ENCODE measurements at regions of chr16 and their contacts with region 1.

Region 1: GRCh38 chr16:47460711-47461597 is at the starts of genes ITFG1 and PHKB:
- DNase-seq: peak; percentile 91 to 97 (median 95)
- ATAC-seq: peak; percentile 95
- H3K4me3 ChIP-seq: peak within 1 kb of the TSS; percentile 77 to 87
- H3K4me3 Mint-ChIP-seq: peak within 1 kb of the TSS; percentile 99
- H3K27ac ChIP-seq: peak within 1 kb of the TSS; percentile 77 to 95
- H3K27ac Mint-ChIP-seq: peak within 1 kb of the TSS; percentile 95
- H3K4me1 ChIP-seq: peaks cover 33% of the 10 kb centered on the region
- H3K4me1 Mint-ChIP-seq: peaks cover 72% of the 10 kb centered on the region
- H3K27me3 ChIP-seq: no peaks in the 10 kb centered on the region
- H3K27me3 Mint-ChIP-seq: no peaks in the 10 kb centered on the region
- CTCF ChIP-seq: no peak
- total RNA-seq, gene ITFG1: 13.2 to 16.8 TPM
- total RNA-seq, gene PHKB: 32.4 to 32.8 TPM

Region 2: DNA sequence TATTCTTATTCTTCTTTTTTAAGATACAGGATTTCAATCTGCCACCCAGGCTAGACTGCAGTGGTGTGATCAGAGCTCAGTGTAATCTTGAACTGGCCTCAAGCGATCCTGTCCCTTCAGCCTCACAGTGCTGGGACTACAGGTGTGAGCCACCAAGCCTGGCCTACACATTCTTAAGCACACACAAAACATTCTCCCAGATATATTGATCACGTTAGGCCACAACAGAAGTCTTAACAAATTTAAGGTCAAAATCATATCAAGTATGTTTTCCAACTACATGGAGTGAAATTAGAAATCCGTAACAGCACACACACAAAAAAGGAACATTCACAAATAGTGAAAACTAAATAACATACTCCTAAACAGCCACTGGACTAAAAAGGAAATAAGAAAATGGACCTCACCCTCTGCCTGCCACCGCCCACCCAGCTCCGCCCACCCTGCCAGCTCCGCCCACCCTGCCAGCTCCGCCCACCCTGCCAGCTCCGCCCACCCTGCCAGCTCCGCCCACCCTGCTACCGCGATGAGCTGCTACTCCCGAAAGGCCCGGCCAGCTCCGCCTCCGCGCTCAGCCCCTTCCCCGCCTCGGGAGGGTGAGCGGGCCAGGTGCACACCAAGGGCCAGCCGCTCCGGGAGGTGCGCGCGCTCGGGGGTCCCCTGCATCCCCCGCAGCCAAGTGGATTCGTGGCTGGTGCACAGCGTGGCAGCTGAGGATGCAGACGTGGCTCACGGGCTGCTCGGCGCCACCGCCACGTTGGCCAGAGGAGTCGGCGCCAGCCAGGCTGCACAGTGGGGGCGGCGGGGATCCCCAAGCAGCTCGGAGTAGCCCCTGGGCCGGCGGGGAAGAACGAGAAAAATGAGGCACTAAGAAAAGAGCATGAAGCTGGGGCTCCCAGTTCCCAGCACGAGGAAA is 671.2 kb before region 1 on chr16:
- CTCF ChIA-PET with region 1: no interaction called
- POLR2A ChIA-PET with region 1: no interaction called
- intact Hi-C with region 1: loop called in 1 of 2 experiments (anchors 2 kb)
- DNase-seq: peak; percentile 66 to 86 (median 78)
- ATAC-seq: peak; percentile 98
- H3K4me3 ChIP-seq: peak overlapping the region; percentile 62 to 69
- H3K4me3 Mint-ChIP-seq: peak overlapping the region; percentile 74
- H3K27ac ChIP-seq: peak overlapping the region in 1 of 2 experiments; percentile 6
- H3K27ac Mint-ChIP-seq: peak overlapping the region; percentile 80
- H3K4me1 ChIP-seq: peaks cover 4% of the 10 kb centered on the region
- H3K4me1 Mint-ChIP-seq: peaks cover 18% of the 10 kb centered on the region
- H3K27me3 ChIP-seq: no peaks in the 10 kb centered on the region
- H3K27me3 Mint-ChIP-seq: no peaks in the 10 kb centered on the region
- CTCF ChIP-seq: no peak

Region 3: DNA sequence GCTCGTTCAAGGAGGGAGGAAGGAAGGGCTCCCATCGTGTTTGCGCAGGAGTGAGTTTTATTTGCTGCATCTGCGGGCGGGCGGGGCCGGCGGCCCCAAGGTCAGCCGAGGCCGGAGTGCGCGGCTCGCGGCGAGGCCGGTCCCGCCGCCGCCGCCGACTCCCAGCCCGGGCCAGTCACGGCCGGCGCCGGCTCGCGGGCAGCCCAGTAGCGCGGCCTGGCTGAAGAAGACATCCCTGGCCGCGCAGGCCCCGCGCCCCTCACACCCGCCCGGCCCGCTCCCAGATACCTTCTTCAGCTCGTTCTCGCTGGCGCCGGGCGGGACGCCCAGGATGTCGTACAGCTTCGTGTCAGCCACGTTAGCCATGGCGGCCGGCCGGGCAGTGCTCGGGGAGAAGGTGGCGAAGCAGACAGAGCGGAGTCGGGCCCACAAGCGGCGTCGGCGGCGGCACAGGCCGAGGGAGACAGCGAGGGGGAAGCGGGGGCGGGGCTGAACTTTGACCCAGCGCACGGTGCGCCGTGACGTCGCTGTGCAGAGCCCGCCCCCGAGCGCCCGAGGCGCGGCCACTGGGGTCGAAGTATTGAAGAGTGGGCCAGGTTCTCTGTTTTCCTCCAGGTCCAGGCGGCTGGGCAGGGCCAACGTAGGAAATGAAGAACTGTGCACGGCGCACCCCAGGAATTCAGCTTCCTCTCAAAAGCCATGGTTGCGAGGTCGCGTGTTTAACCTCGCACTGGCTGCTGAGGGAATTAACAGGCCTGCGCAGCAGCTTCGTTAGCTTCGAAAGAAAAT is 487.6 kb before region 1 on chr16 and contains the start of gene DNAJA2:
- CTCF ChIA-PET with region 1: interaction called, 3 read pairs
- POLR2A ChIA-PET with region 1: interaction called, 6 read pairs
- intact Hi-C with region 1: loop called (anchors 1 to 5 kb)
- DNase-seq: peak; percentile 84 to 96 (median 93)
- ATAC-seq: peak; percentile 93
- H3K4me3 ChIP-seq: peak within 1 kb of the TSS; percentile 87 to 89
- H3K4me3 Mint-ChIP-seq: peak within 1 kb of the TSS; percentile 92
- H3K27ac ChIP-seq: peak within 1 kb of the TSS; percentile 96 to 98
- H3K27ac Mint-ChIP-seq: peak within 1 kb of the TSS; percentile 100
- H3K4me1 ChIP-seq: peaks cover 45% of the 10 kb centered on the region
- H3K4me1 Mint-ChIP-seq: peaks cover 53% of the 10 kb centered on the region
- H3K27me3 ChIP-seq: no peaks in the 10 kb centered on the region
- H3K27me3 Mint-ChIP-seq: no peaks in the 10 kb centered on the region
- CTCF ChIP-seq: no peak
- total RNA-seq, gene DNAJA2: 82.8 to 83.1 TPM

Region 4: GRCh38 chr16:47431960-47432359 is 29.0 kb before region 1 on chr16:
- CTCF ChIA-PET with region 1: no interaction called
- POLR2A ChIA-PET with region 1: no interaction called
- intact Hi-C with region 1: no loop called
- DNase-seq: no peak
- ATAC-seq: no peak
- H3K4me3 ChIP-seq: no peak overlapping the region
- H3K4me3 Mint-ChIP-seq: no peak overlapping the region
- H3K27ac ChIP-seq: no peak overlapping the region
- H3K27ac Mint-ChIP-seq: no peak overlapping the region
- H3K4me1 ChIP-seq: no peaks in the 10 kb centered on the region
- H3K4me1 Mint-ChIP-seq: peaks cover 11% of the 10 kb centered on the region
- H3K27me3 ChIP-seq: no peaks in the 10 kb centered on the region
- H3K27me3 Mint-ChIP-seq: no peaks in the 10 kb centered on the region
- CTCF ChIP-seq: no peak

Region 5: GRCh38 chr16:47492428-47493377 is 31.7 kb after region 1 on chr16:
- CTCF ChIA-PET with region 1: interaction called, 3 read pairs
- POLR2A ChIA-PET with region 1: interaction called, 3 read pairs
- intact Hi-C with region 1: loop called in 1 of 2 experiments (anchors 2 kb)
- DNase-seq: peak in 2 of 9 experiments; percentile 11 to 35
- ATAC-seq: peak; percentile 83
- H3K4me3 ChIP-seq: no peak overlapping the region
- H3K4me3 Mint-ChIP-seq: peak overlapping the region; percentile 85
- H3K27ac ChIP-seq: no peak overlapping the region
- H3K27ac Mint-ChIP-seq: peak overlapping the region; percentile 94
- H3K4me1 ChIP-seq: peaks cover 35% of the 10 kb centered on the region
- H3K4me1 Mint-ChIP-seq: peaks cover 55% of the 10 kb centered on the region
- H3K27me3 ChIP-seq: no peaks in the 10 kb centered on the region
- H3K27me3 Mint-ChIP-seq: no peaks in the 10 kb centered on the region
- CTCF ChIP-seq: no peak

Region 6: GRCh38 chr16:48244080-48244862 is 783.3 kb after region 1 on chr16 and contains the start of gene LONP2:
- CTCF ChIA-PET with region 1: no interaction called
- POLR2A ChIA-PET with region 1: no interaction called
- intact Hi-C with region 1: loop called (anchors 1 to 2 kb)
- DNase-seq: peak; percentile 82 to 93 (median 89)
- ATAC-seq: peak; percentile 94
- H3K4me3 ChIP-seq: peak within 1 kb of the TSS; percentile 66 to 88
- H3K4me3 Mint-ChIP-seq: peak within 1 kb of the TSS; percentile 90
- H3K27ac ChIP-seq: peak within 1 kb of the TSS; percentile 75 to 83
- H3K27ac Mint-ChIP-seq: peak within 1 kb of the TSS; percentile 95
- H3K4me1 ChIP-seq: peaks cover 38% of the 10 kb centered on the region
- H3K4me1 Mint-ChIP-seq: peaks cover 50% of the 10 kb centered on the region
- H3K27me3 ChIP-seq: no peaks in the 10 kb centered on the region
- H3K27me3 Mint-ChIP-seq: no peaks in the 10 kb centered on the region
- CTCF ChIP-seq: no peak
- total RNA-seq, gene LONP2: 71.8 to 72.1 TPM

Region 7: GRCh38 chr16:48609652-48610029 is 1148.7 kb after region 1 on chr16:
- CTCF ChIA-PET with region 1: no interaction called
- POLR2A ChIA-PET with region 1: no interaction called
- intact Hi-C with region 1: loop called in 1 of 2 experiments (anchors 10 kb)
- DNase-seq: no peak
- ATAC-seq: peak; percentile 17
- H3K4me3 ChIP-seq: peak overlapping the region; percentile 81 to 88
- H3K4me3 Mint-ChIP-seq: peak overlapping the region; percentile 86
- H3K27ac ChIP-seq: peak overlapping the region; percentile 72 to 87
- H3K27ac Mint-ChIP-seq: peak overlapping the region; percentile 94
- H3K4me1 ChIP-seq: peaks cover 79% of the 10 kb centered on the region
- H3K4me1 Mint-ChIP-seq: peaks cover 40% of the 10 kb centered on the region
- H3K27me3 ChIP-seq: no peaks in the 10 kb centered on the region
- H3K27me3 Mint-ChIP-seq: no peaks in the 10 kb centered on the region
- CTCF ChIP-seq: no peak

Measured in CD8-positive, alpha-beta T cell (primary cell).